MCF 10A (cell line): ENCODE measurements at regions of chr17 and their contacts with region 1.

Region 1: GRCh38 chr17:73291260-73291801 is 20.5 kb downstream of the CDC42EP4 start:
- DNase-seq: peak; percentile 94
- H3K4me3 Mint-ChIP-seq: peak overlapping the region; percentile 54
- H3K27ac Mint-ChIP-seq: peak overlapping the region; percentile 89
- H3K4me1 Mint-ChIP-seq: peaks cover 65% of the 10 kb centered on the region
- H3K27me3 Mint-ChIP-seq: no peaks in the 10 kb centered on the region
- CTCF ChIP-seq: no peak

Region 2: GRCh38 chr17:73304971-73305812 is 13.9 kb after region 1 on chr17:
- CTCF ChIA-PET with region 1: interaction called, 6 read pairs
- POLR2A ChIA-PET with region 1: interaction called, 96 read pairs
- intact Hi-C with region 1: loop called (anchors 2 kb)
- DNase-seq: peak; percentile 84
- H3K4me3 Mint-ChIP-seq: peak overlapping the region; percentile 61
- H3K27ac Mint-ChIP-seq: peak overlapping the region; percentile 77
- H3K4me1 Mint-ChIP-seq: peaks cover 46% of the 10 kb centered on the region
- H3K27me3 Mint-ChIP-seq: no peaks in the 10 kb centered on the region
- CTCF ChIP-seq: no peak

Region 3: DNA sequence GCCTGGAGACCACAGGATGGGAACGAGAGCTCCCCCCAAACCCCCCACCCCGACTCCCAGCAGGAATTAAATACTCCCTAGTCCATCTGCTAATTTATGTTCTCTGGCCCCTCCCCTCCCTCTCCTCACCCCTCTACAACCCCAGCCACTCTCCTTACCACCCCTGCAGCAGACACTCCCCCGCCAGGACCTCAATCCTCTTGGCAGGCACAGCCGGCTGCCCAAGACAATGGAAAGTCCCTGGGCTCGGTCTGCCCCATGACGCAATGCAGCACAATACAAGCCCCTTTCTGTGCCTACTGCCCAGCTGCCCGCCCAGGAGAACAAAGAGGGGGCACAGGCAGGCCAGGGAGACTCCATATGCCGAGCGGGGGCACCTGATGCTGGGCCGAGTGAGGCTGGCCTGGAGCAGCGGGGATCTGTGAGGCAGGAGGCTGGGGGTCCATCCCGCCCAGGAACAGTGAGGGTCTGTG is 50.8 kb after region 1 on chr17:
- CTCF ChIA-PET with region 1: no interaction called
- POLR2A ChIA-PET with region 1: interaction called, 3 read pairs
- intact Hi-C with region 1: loop called (anchors 1 kb)
- DNase-seq: peak; percentile 93
- H3K4me3 Mint-ChIP-seq: peak overlapping the region; percentile 8
- H3K27ac Mint-ChIP-seq: peak overlapping the region; percentile 54
- H3K4me1 Mint-ChIP-seq: peaks cover 25% of the 10 kb centered on the region
- H3K27me3 Mint-ChIP-seq: no peaks in the 10 kb centered on the region
- CTCF ChIP-seq: no peak